Left ventricle myocardium superior (tissue), 1 donor: ENCODE measurements at regions of chr1 and their contacts with region 1.

Region 1: DNA sequence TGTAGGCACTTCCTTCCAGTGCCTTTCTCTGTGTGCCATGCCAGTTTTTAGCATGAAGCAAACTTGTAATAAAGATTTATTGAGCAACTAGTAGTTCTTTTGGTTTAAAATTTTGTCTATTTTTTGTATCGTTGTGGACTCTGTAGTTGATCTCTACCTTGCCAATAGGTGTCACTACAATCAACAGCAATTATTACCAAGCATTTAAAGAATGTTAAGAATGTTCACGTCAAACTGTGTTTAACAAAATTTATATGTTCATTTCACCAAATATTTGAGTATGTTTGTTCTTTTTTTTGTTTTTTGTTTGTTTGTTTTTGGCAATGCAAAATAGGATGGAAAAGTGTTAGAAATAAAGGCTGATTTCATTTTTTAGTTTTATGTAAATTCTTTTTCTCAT is 208.1 kb downstream of the PATJ start:
- DNase-seq: no peak
- ATAC-seq: no peak

Region 2: GRCh38 chr1:62068978-62069377 is 118.6 kb after region 1 on chr1:
- intact Hi-C with region 1: loop called (anchors 10 kb)
- DNase-seq: no peak
- ATAC-seq: peak; percentile 90

Region 3: DNA sequence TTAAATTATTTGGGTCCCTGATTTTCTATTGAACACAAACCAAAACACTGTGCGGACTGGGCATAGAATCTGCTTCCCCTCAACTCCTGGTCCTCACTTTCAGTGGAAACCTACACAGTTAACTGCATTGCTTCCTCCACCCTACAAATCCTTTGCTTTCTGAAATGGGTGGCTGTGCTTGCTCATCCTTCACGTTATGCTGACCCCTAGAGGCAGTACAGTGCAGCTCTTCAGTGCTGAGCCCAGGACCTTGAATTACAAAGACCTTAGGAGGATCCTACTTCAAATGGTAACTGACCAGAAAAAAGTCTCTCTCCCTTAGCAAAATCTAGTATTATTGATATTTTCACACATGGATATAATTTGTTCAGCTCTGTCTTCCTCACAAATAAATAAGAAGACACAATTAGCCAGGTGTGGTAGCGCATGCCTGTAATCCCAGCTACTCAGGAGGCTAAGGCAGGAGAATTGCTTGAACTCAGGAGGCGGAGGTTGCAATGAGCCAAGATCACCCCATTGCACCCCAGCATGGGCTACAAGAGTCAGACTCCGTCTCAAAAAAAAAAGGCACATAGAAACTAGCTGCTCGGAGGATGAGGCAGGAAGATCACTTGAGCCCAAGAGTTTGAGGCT is 180.8 kb after region 1 on chr1:
- intact Hi-C with region 1: no loop called
- DNase-seq: no peak
- ATAC-seq: peak; percentile 77